ENCODE measurements at regions of chr2 and their contacts with region 1.

Region 1: DNA sequence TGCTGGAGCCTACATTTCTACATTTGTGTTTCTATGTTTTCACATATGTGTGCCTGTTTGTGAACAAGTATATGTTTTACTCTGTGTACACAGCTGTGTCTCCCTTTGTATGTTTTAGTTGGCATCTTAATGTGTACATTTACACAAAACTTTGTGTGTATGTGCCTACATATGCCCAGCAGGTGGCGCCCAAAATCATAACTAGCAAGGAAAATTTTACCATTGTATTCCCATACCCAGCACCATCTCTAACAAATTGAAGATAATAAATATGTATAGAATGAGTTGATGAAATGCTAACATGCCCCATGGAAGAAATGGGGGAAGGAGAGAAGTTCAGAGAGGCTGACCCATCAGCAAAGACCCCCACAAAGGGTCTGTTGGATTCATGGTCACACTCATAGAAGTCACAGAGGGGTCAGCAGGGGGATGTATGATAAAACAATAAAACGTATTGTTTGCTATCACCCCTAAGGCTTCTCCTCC is 48.1 kb downstream of the PKDCC start:
- DNase-seq: no peak
- ATAC-seq: peak; percentile 53
- H3K4me3 ChIP-seq: no peak overlapping the region
- H3K27ac ChIP-seq: no peak overlapping the region
- H3K4me1 ChIP-seq: peaks cover 41% of the 10 kb centered on the region
- H3K27me3 ChIP-seq: no peaks in the 10 kb centered on the region
- CTCF ChIP-seq: peak; percentile 67 to 87 (median 81); a peak in 5 of 6 replicates
- EP300 ChIP-seq: no peak
- POLR2A ChIP-seq: no peak
- RAD21 ChIP-seq: peak; percentile 96

Region 2: DNA sequence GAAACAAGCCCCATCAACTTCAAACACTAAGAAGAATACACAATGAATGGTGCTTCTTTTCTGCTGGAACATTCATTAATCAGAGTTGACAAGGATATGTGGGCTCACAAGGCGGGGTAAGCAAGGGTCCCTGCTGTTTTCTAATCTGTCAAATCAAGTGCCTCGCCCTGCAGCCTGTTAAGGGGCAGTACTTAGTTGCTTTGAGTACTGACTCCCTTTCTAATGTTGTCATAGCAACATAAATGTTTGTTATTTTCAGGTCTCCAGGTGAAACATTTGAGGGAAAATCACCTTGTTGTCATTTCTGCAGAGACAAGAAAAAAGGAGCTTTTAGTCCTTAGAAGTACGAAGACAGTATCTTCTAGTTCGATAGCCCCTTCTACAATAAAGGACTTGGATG is 332.8 kb before region 1 on chr2:
- CTCF ChIA-PET with region 1: no interaction called
- POLR2A ChIA-PET with region 1: no interaction called
- RAD21 ChIA-PET with region 1: no interaction called
- SMC1A ChIA-PET with region 1: no interaction called
- in situ Hi-C with region 1: no loop called
- intact Hi-C with region 1: no loop called
- DNase-seq: no peak
- ATAC-seq: no peak
- H3K4me3 ChIP-seq: no peak overlapping the region
- H3K27ac ChIP-seq: no peak overlapping the region
- H3K4me1 ChIP-seq: no peaks in the 10 kb centered on the region
- H3K27me3 ChIP-seq: no peaks in the 10 kb centered on the region
- CTCF ChIP-seq: no peak
- EP300 ChIP-seq: no peak
- POLR2A ChIP-seq: no peak
- RAD21 ChIP-seq: no peak

Region 3: GRCh38 chr2:42127425-42128424 is 31.8 kb after region 1 on chr2:
- CTCF ChIA-PET with region 1: interaction called, 23 read pairs
- POLR2A ChIA-PET with region 1: no interaction called
- RAD21 ChIA-PET with region 1: interaction called, 21 read pairs
- SMC1A ChIA-PET with region 1: interaction called, 87 read pairs
- in situ Hi-C with region 1: no loop called
- intact Hi-C with region 1: no loop called
- DNase-seq: peak; percentile 83
- ATAC-seq: peak; percentile 77
- H3K4me3 ChIP-seq: peak overlapping the region; percentile 47
- H3K27ac ChIP-seq: peak overlapping the region; percentile 73
- H3K4me1 ChIP-seq: peaks cover 63% of the 10 kb centered on the region
- H3K27me3 ChIP-seq: no peaks in the 10 kb centered on the region
- CTCF ChIP-seq: no peak
- EP300 ChIP-seq: peak; percentile 69 to 70; a peak in 2 of 4 replicates
- POLR2A ChIP-seq: 0 out of 2 replicates have a peak, but pooled peaks have one; percentile 32
- RAD21 ChIP-seq: peak; percentile 28; the same call in 1 of the 2 replicates

Region 4: GRCh38 chr2:42169100-42169873 is 73.3 kb after region 1 on chr2 and contains the start of gene EML4:
- CTCF ChIA-PET with region 1: interaction called, 24 read pairs
- POLR2A ChIA-PET with region 1: interaction called, 6 read pairs
- RAD21 ChIA-PET with region 1: interaction called, 9 read pairs
- SMC1A ChIA-PET with region 1: interaction called, 40 read pairs
- in situ Hi-C with region 1: loop called (anchors 5 kb)
- intact Hi-C with region 1: no loop called
- DNase-seq: peak; percentile 52
- ATAC-seq: peak; percentile 79
- H3K4me3 ChIP-seq: peak within 1 kb of the TSS; percentile 92
- H3K27ac ChIP-seq: peak within 1 kb of the TSS; percentile 82
- H3K4me1 ChIP-seq: peaks cover 3% of the 10 kb centered on the region
- H3K27me3 ChIP-seq: no peaks in the 10 kb centered on the region
- CTCF ChIP-seq: no peak
- EP300 ChIP-seq: no peak
- POLR2A ChIP-seq: peak; percentile 92
- RAD21 ChIP-seq: no peak
- polyA plus RNA-seq, gene EML4: 23.1 to 30.8 TPM

Region 5: DNA sequence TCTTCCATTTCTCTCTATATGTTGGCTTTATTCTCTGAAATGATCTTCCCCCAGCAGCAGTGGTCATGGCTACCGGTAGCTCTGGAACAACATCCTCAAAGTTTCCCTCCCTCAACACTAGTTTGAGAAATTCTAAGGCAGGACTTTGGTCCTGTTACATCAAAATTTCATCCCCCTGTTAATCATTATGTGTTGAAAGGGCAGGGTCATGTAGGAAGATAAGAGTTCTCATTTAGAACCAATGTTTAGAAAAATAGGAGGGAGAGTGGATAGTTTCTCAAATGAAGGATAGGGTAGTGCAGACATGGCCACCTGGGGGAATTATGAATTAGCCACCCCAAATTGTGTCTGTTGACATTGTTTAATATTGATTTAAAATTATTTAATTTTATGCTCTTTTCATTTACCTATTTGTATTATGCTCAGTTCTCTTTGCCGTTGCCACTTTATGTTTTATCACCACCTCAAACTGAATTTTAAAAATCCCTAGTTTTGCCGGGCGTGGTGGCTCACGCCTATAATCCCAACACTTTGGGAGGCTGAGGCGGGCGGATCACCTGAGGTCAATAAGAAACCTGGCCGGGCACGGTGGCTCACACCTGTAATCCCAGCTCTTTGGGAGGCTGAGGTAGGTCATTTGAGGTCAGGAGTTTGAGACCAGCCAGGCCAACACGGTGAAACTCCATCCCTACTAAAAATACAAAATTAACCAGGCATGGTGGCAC is 95.5 kb after region 1 on chr2:
- CTCF ChIA-PET with region 1: interaction called, 160 read pairs
- POLR2A ChIA-PET with region 1: interaction called, 6 read pairs
- RAD21 ChIA-PET with region 1: interaction called, 64 read pairs
- SMC1A ChIA-PET with region 1: interaction called, 95 read pairs
- in situ Hi-C with region 1: loop called (anchors 5 kb)
- intact Hi-C with region 1: loop called (anchors 1 kb)
- DNase-seq: no peak
- ATAC-seq: no peak
- H3K4me3 ChIP-seq: no peak overlapping the region
- H3K27ac ChIP-seq: no peak overlapping the region
- H3K4me1 ChIP-seq: peaks cover 11% of the 10 kb centered on the region; the same call in 1 of the 2 replicates
- H3K27me3 ChIP-seq: no peaks in the 10 kb centered on the region
- CTCF ChIP-seq: no peak
- EP300 ChIP-seq: no peak
- POLR2A ChIP-seq: no peak
- RAD21 ChIP-seq: no peak

Region 6: GRCh38 chr2:42205337-42205736 is 109.4 kb after region 1 on chr2:
- CTCF ChIA-PET with region 1: interaction called, 5 read pairs
- POLR2A ChIA-PET with region 1: interaction called, 3 read pairs
- RAD21 ChIA-PET with region 1: interaction called, 7 read pairs
- SMC1A ChIA-PET with region 1: interaction called, 18 read pairs
- in situ Hi-C with region 1: no loop called
- intact Hi-C with region 1: no loop called
- DNase-seq: no peak
- ATAC-seq: peak; percentile 39; the same call in 1 of the 3 replicates
- H3K4me3 ChIP-seq: no peak overlapping the region
- H3K27ac ChIP-seq: no peak overlapping the region
- H3K4me1 ChIP-seq: no peaks in the 10 kb centered on the region
- H3K27me3 ChIP-seq: no peaks in the 10 kb centered on the region
- CTCF ChIP-seq: no peak
- EP300 ChIP-seq: no peak
- POLR2A ChIP-seq: no peak
- RAD21 ChIP-seq: no peak

Region 7: GRCh38 chr2:42230891-42231290 is 134.9 kb after region 1 on chr2:
- CTCF ChIA-PET with region 1: interaction called, 186 read pairs
- POLR2A ChIA-PET with region 1: no interaction called
- RAD21 ChIA-PET with region 1: no interaction called
- SMC1A ChIA-PET with region 1: interaction called, 19 read pairs
- in situ Hi-C with region 1: loop called (anchors 10 kb)
- intact Hi-C with region 1: no loop called
- DNase-seq: no peak
- ATAC-seq: no peak
- H3K4me3 ChIP-seq: no peak overlapping the region
- H3K27ac ChIP-seq: no peak overlapping the region
- H3K4me1 ChIP-seq: no peaks in the 10 kb centered on the region
- H3K27me3 ChIP-seq: no peaks in the 10 kb centered on the region
- CTCF ChIP-seq: no peak
- EP300 ChIP-seq: no peak
- POLR2A ChIP-seq: no peak
- RAD21 ChIP-seq: no peak

Region 8: DNA sequence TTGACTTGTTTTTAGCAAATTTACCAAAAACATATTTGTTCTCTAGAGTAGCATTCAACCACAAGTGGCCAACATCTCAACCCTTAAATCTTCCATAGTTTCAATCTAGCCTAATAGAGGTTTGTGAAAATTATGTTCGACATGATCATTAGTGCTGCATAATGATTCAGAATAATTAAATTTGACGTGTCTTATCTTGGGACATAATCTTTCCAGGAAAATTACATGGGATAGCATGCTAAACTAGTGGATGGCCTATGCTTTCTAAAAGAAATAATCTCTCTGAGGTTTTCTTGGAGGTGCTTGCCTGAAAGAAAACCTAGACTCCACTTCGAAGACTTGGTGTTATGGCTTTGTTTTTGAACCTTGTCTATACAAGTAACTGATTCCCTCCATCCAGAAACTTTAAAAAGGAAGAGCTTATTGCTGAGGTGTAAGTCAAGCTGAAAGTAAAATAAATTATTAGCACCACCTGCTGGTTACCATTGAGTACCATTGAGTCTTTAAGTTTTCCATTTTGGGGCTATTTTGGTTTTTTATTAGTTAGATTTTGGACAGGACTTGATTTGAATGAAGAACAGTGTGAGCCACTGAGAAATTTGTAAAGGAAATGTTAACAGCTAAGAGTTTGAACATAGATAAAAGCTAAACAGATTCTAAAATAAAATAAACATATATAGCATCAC is 232.3 kb after region 1 on chr2:
- CTCF ChIA-PET with region 1: interaction called, 89 read pairs
- POLR2A ChIA-PET with region 1: no interaction called
- RAD21 ChIA-PET with region 1: interaction called, 39 read pairs
- SMC1A ChIA-PET with region 1: interaction called, 48 read pairs
- in situ Hi-C with region 1: loop called (anchors 5 kb)
- intact Hi-C with region 1: loop called (anchors 1 kb)
- DNase-seq: no peak
- ATAC-seq: peak; percentile 73
- H3K4me3 ChIP-seq: no peak overlapping the region
- H3K27ac ChIP-seq: no peak overlapping the region
- H3K4me1 ChIP-seq: no peaks in the 10 kb centered on the region
- H3K27me3 ChIP-seq: no peaks in the 10 kb centered on the region
- CTCF ChIP-seq: peak; percentile 26 to 47 (median 29); a peak in 3 of 6 replicates
- EP300 ChIP-seq: no peak
- POLR2A ChIP-seq: no peak
- RAD21 ChIP-seq: peak; percentile 58

Measured in GM12878 (cell line).